Ovary (tissue), 10 donors: ENCODE measurements at regions of chr10 and their contacts with region 1.

Region 1: GRCh38 chr10:74262856-74263255 is 111.8 kb downstream of the ADK start:
- DNase-seq: no peak
- H3K4me3 ChIP-seq: no peak overlapping the region
- H3K27ac ChIP-seq: no peak overlapping the region
- H3K4me1 ChIP-seq: peaks cover 2% of the 10 kb centered on the region
- H3K27me3 ChIP-seq: no peaks in the 10 kb centered on the region
- CTCF ChIP-seq: no peak
- EP300 ChIP-seq: no peak
- POLR2A ChIP-seq: no peak

Region 2: GRCh38 chr10:74548676-74549075 is 285.8 kb after region 1 on chr10:
- intact Hi-C with region 1: no loop called
- DNase-seq: no peak
- H3K4me3 ChIP-seq: no peak overlapping the region
- H3K27ac ChIP-seq: no peak overlapping the region
- H3K4me1 ChIP-seq: no peaks in the 10 kb centered on the region
- H3K27me3 ChIP-seq: no peaks in the 10 kb centered on the region
- CTCF ChIP-seq: no peak
- EP300 ChIP-seq: no peak
- POLR2A ChIP-seq: no peak

Region 3: GRCh38 chr10:75029857-75030256 is 767.0 kb after region 1 on chr10:
- intact Hi-C with region 1: loop called in 1 of 4 experiments (anchors 10 kb)
- DNase-seq: peak; percentile 56 to 74 (median 68)
- H3K4me3 ChIP-seq: no peak overlapping the region
- H3K27ac ChIP-seq: no peak overlapping the region
- H3K4me1 ChIP-seq: peaks cover 8% of the 10 kb centered on the region
- H3K27me3 ChIP-seq: no peaks in the 10 kb centered on the region
- CTCF ChIP-seq: no peak
- EP300 ChIP-seq: no peak
- POLR2A ChIP-seq: no peak

Region 4: DNA sequence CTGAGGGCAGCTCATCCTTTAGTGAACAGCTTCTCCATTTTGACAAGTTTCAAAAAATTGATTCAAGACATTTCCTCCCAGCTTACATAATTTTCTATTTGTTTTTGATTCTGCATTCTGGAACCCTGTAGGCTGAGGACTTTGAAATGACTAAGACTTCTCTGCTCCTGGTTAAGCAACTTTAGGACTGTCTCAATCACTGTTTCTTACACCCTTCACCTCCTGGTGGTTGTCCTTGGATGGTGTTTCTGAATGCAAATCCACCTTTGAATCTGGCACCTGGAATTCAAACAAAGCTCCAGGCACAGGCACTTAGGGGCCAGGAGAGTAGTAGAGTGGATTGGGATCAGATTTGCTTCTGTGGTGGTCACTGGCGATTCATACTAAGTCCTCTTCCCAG is 1764.0 kb after region 1 on chr10:
- intact Hi-C with region 1: no loop called
- DNase-seq: no peak
- H3K4me3 ChIP-seq: no peak overlapping the region
- H3K27ac ChIP-seq: no peak overlapping the region
- H3K4me1 ChIP-seq: no peaks in the 10 kb centered on the region
- H3K27me3 ChIP-seq: no peaks in the 10 kb centered on the region
- CTCF ChIP-seq: no peak
- EP300 ChIP-seq: no peak
- POLR2A ChIP-seq: no peak